ENCODE measurements at regions of chr5 and their contacts with region 1.

Region 1: DNA sequence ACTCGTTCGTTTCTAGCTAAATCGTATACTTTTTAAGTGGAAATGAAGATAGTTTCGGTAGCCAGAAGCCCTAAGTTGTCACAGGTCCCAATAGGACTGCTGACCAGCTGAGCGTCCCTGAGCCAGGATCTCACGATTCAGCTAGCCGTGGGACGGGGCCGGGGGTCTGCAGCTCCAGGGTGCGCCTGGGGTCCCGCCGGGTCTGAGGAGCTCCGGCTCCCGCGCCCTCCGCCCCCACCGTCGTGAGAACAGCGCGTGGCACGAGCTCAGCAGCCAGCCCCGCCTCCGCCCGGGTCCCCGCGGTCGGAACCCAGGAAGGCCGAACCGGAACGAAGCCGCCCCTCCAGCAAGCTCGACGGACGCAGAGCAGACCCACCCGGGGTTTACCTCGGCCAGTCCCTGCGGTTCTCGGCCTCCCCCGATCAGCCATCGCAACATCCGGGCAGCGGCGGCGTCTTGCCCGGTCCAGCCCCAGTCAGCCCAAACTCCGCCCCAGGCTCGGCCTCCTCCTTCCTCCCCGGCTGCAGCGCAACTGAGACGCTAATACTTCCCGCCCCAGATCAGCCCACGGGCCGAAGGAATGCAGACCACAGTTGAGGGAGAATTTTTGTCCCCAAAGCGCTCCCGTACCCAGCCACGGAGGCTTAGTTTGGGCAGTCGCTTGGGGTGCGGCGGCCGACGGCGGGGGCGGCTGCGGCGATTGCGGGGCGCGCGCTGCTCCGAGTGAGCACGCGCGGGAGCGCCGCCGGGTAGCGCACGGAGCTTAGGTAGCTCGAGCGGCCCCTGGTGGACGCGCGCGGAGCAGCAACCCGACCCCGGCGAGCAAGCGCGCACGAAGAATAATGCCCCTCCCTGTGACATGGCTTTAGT is at the start of gene WDR41:
- DNase-seq: peak; percentile 95
- ATAC-seq: peak; percentile 97
- total RNA-seq, gene WDR41: 43.2 TPM

Region 2: DNA sequence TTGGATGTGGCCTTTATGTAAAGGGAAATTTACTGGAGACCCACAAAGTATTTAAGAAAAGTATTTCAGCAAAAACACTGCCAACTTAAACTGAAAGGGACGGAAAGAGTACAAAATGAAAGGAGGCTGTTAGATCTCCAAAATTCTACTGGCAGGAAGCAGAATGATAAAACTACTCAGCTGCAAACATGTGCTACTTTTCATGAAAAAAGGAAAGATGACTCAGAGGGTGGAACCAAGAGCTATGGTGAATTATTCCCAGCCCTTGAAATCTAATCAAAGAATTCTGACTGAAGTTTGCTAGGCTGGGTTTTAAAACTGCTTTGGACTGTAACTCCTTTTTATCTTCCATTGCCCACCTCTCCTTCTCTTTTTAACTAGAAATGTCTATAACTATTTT is 346.4 kb before region 1 on chr5:
- intact Hi-C with region 1: loop called (anchors 5 kb)
- DNase-seq: no peak
- ATAC-seq: no peak

Measured in sciatic nerve (tissue), 2 donors.